ENCODE measurements at regions of chr12 and their contacts with region 1.

Region 1: GRCh38 chr12:1795785-1796514 is 24.4 kb upstream of the LRTM2 start:
- DNase-seq: peak; percentile 97
- ATAC-seq: peak; percentile 97
- H3K4me3 Mint-ChIP-seq: peak overlapping the region; percentile 83
- H3K27ac Mint-ChIP-seq: peak overlapping the region; percentile 86
- H3K4me1 Mint-ChIP-seq: peaks cover 15% of the 10 kb centered on the region
- H3K27me3 Mint-ChIP-seq: no peaks in the 10 kb centered on the region

Region 2: GRCh38 chr12:1634590-1635191 is 161.3 kb before region 1 on chr12:
- CTCF ChIA-PET with region 1: interaction called, 68 read pairs
- POLR2A ChIA-PET with region 1: no interaction called
- intact Hi-C with region 1: loop called in 1 of 2 experiments (anchors 1 kb)
- DNase-seq: peak; percentile 82
- ATAC-seq: peak; percentile 73
- H3K4me3 Mint-ChIP-seq: no peak overlapping the region
- H3K27ac Mint-ChIP-seq: no peak overlapping the region
- H3K4me1 Mint-ChIP-seq: peaks cover 13% of the 10 kb centered on the region
- H3K27me3 Mint-ChIP-seq: peaks cover 51% of the 10 kb centered on the region

Region 3: DNA sequence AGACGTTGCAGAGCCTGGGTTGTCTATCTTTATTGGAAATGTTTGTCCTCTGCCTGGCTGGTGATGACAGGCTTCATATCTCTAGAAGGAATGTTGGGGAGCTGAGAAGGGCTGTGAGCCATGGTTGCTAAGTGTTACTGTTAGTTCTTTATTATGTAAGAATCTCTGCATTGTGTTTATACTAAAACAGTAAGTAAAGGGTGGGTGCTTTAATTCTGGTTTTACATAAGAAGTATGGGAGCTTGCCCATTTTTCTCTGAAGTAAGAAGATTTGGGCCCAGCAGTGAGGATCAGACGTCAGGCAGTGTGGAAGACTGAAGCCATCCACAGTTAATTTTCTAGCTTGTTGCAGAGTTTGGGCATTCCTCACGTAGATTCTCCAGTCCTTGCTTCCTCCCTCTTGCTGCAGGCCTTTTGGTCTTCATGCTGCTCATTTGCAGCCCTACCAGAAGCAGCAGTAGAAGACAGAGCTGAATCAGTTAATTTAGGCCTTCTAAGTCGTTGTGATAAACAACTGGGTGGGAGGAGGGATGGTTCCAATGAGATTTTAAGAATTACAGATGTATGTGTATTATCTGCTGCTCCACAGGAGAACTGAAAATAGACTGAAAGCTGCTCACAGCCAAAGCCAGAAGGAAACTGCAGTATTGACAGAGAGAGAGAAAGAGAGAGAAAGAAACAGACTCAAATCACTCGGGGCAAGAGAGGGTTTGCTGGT is 145.5 kb before region 1 on chr12:
- CTCF ChIA-PET with region 1: interaction called, 246 read pairs
- POLR2A ChIA-PET with region 1: interaction called, 4 read pairs
- intact Hi-C with region 1: loop called (anchors 1 kb)
- DNase-seq: no peak
- ATAC-seq: no peak
- H3K4me3 Mint-ChIP-seq: no peak overlapping the region
- H3K27ac Mint-ChIP-seq: no peak overlapping the region
- H3K4me1 Mint-ChIP-seq: peaks cover 1% of the 10 kb centered on the region
- H3K27me3 Mint-ChIP-seq: peaks cover 9% of the 10 kb centered on the region

Region 4: GRCh38 chr12:1690578-1691122 is 105.3 kb before region 1 on chr12 and contains the start of gene ADIPOR2:
- CTCF ChIA-PET with region 1: interaction called, 19 read pairs
- POLR2A ChIA-PET with region 1: interaction called, 3 read pairs
- intact Hi-C with region 1: loop called in 1 of 2 experiments (anchors 1 kb)
- DNase-seq: peak; percentile 96
- ATAC-seq: peak; percentile 99
- H3K4me3 Mint-ChIP-seq: peak within 1 kb of the TSS; percentile 95
- H3K27ac Mint-ChIP-seq: peak within 1 kb of the TSS; percentile 97
- H3K4me1 Mint-ChIP-seq: peaks cover 47% of the 10 kb centered on the region
- H3K27me3 Mint-ChIP-seq: peaks cover 3% of the 10 kb centered on the region
- total RNA-seq, gene ADIPOR2: 51.7 to 52.6 TPM

Region 5: GRCh38 chr12:2004113-2004929 is 208.4 kb after region 1 on chr12 and contains the start of gene DCP1B:
- CTCF ChIA-PET with region 1: no interaction called
- POLR2A ChIA-PET with region 1: no interaction called
- intact Hi-C with region 1: loop called in 1 of 2 experiments (anchors 1 kb)
- DNase-seq: peak; percentile 98
- ATAC-seq: peak; percentile 100
- H3K4me3 Mint-ChIP-seq: peak within 1 kb of the TSS; percentile 95
- H3K27ac Mint-ChIP-seq: peak within 1 kb of the TSS; percentile 99
- H3K4me1 Mint-ChIP-seq: peaks cover 25% of the 10 kb centered on the region
- H3K27me3 Mint-ChIP-seq: no peaks in the 10 kb centered on the region
- total RNA-seq, gene DCP1B: 14.5 to 16.1 TPM

Region 6: GRCh38 chr12:2291182-2291832 is 495.4 kb after region 1 on chr12:
- CTCF ChIA-PET with region 1: no interaction called
- POLR2A ChIA-PET with region 1: no interaction called
- intact Hi-C with region 1: loop called in 1 of 2 experiments (anchors 10 kb)
- DNase-seq: peak; percentile 64
- ATAC-seq: peak; percentile 74
- H3K4me3 Mint-ChIP-seq: no peak overlapping the region
- H3K27ac Mint-ChIP-seq: no peak overlapping the region
- H3K4me1 Mint-ChIP-seq: peaks cover 11% of the 10 kb centered on the region
- H3K27me3 Mint-ChIP-seq: peaks cover 2% of the 10 kb centered on the region

Region 7: GRCh38 chr12:2583091-2583497 is 787.1 kb after region 1 on chr12:
- CTCF ChIA-PET with region 1: interaction called, 5 read pairs
- POLR2A ChIA-PET with region 1: no interaction called
- intact Hi-C with region 1: loop called (anchors 1 to 5 kb)
- DNase-seq: peak; percentile 83
- ATAC-seq: peak; percentile 95
- H3K4me3 Mint-ChIP-seq: no peak overlapping the region
- H3K27ac Mint-ChIP-seq: no peak overlapping the region
- H3K4me1 Mint-ChIP-seq: no peaks in the 10 kb centered on the region
- H3K27me3 Mint-ChIP-seq: peaks cover 43% of the 10 kb centered on the region